Mammary epithelial cell (primary cell): ENCODE measurements at regions of chr15 and their contacts with region 1.

Region 1: GRCh38 chr15:84894442-84895361 is 10.2 kb downstream of the SLC28A1 start:
- DNase-seq: no peak
- H3K4me3 ChIP-seq: no peak overlapping the region
- H3K27ac ChIP-seq: no peak overlapping the region
- H3K4me1 ChIP-seq: peaks cover 6% of the 10 kb centered on the region
- H3K27me3 ChIP-seq: no peaks in the 10 kb centered on the region
- CTCF ChIP-seq: no peak

Region 2: GRCh38 chr15:84840741-84841429 is 53.8 kb before region 1 on chr15:
- CTCF ChIA-PET with region 1: no interaction called
- dilution Hi-C with region 1: loop called (anchors 5 kb)
- in situ Hi-C with region 1: no loop called
- intact Hi-C with region 1: no loop called
- DNase-seq: peak; percentile 12
- H3K4me3 ChIP-seq: no peak overlapping the region
- H3K27ac ChIP-seq: no peak overlapping the region
- H3K4me1 ChIP-seq: no peaks in the 10 kb centered on the region
- H3K27me3 ChIP-seq: no peaks in the 10 kb centered on the region
- CTCF ChIP-seq: no peak

Region 3: GRCh38 chr15:84973492-84974460 is 79.1 kb after region 1 on chr15:
- CTCF ChIA-PET with region 1: no interaction called
- dilution Hi-C with region 1: loop called (anchors 5 kb)
- in situ Hi-C with region 1: no loop called
- intact Hi-C with region 1: no loop called
- DNase-seq: no peak
- H3K4me3 ChIP-seq: no peak overlapping the region
- H3K27ac ChIP-seq: no peak overlapping the region
- H3K4me1 ChIP-seq: no peaks in the 10 kb centered on the region
- H3K27me3 ChIP-seq: no peaks in the 10 kb centered on the region
- CTCF ChIP-seq: no peak